ENCODE measurements at regions of chr4 and their contacts with region 1.

Region 1: DNA sequence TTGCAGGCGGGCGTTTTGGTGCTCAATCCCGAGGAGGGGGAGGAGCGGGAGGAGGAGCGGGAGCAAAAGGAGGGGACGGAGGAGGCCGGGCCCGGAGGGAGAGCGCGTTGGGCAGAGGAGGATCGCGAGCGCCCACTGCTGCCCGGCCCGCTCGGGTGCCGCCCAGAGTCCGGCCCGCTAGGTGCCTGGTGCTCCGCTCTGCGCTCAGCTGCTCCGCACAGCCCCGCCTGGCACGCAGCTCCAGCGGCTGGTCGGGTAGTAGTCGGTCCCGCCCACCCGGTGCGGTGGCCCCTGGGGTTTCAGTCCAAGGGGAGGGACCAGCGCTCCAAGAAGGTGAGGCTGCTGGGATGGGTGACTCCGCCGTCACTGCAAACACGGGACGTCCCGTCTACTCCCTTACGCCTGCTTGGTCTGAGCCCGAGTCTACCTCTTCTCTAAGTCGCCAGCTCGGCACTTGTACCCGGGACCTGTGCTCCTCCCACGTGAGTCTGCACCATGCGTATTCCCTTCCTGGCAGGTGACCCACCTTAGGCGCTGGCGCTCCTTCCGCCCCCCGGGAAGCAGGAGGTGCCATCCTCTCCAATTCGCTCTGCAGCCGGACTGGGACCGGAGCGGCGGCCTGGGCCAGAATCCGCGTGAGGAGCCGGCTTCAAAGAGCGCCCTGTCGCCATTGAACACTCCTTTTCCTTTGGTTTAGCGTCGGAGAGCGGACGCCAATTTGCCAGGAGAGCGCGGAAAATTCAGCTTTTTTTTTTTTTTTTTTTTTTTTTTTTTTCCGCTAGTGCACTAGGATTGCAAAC is 405 bp upstream of the HS3ST1 start:
- DNase-seq: no peak
- H3K4me3 ChIP-seq: peak overlapping the region; percentile 49 to 69
- H3K27ac ChIP-seq: no peak overlapping the region
- H3K4me1 ChIP-seq: peaks cover 26% of the 10 kb centered on the region
- H3K27me3 ChIP-seq: no peaks in the 10 kb centered on the region
- CTCF ChIP-seq: peak in 2 of 3 experiments; percentile 39 to 45
- POLR2A ChIP-seq: no peak

Region 2: DNA sequence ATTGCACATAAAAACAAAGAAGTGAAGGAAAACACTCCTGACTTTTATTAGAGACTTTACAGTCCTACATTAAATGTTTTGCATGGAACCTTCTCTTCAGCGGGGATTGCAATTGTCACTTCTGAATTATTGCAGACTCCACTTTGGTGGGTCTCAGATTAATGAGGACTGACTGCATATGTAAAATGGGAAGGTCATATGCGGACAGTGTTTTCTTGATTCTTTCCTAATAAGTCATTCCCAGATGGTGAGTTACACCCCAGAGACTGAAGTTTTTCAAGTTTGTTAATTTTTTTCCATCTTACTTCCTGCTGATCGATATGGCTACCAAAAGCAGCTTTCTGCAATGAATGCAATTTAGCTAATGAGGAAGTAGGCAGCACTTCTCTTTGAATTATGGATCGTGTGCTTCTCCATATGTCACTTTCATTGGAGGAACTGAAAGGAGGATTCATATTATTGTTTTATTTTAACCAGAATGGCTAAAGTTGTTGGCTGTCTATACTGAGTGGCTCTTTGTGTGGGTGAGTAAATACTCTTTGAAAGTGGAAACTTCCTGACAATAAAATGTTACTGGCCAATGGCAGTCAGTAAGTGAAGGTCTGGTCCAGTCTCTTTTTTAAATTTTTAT is 625.3 kb before region 1 on chr4:
- intact Hi-C with region 1: no loop called
- DNase-seq: no peak
- H3K4me3 ChIP-seq: no peak overlapping the region
- H3K27ac ChIP-seq: no peak overlapping the region
- H3K4me1 ChIP-seq: no peaks in the 10 kb centered on the region
- H3K27me3 ChIP-seq: no peaks in the 10 kb centered on the region
- CTCF ChIP-seq: no peak
- POLR2A ChIP-seq: no peak

Region 3: GRCh38 chr4:11446155-11446811 is 17.2 kb after region 1 on chr4:
- intact Hi-C with region 1: loop called (anchors 1 kb)
- DNase-seq: no peak
- H3K4me3 ChIP-seq: no peak overlapping the region
- H3K27ac ChIP-seq: no peak overlapping the region
- H3K4me1 ChIP-seq: peaks cover 5% of the 10 kb centered on the region
- H3K27me3 ChIP-seq: no peaks in the 10 kb centered on the region
- CTCF ChIP-seq: no peak
- POLR2A ChIP-seq: no peak